ENCODE measurements at regions of chr1 and their contacts with region 1.

Region 1: GRCh38 chr1:109783429-109783831 is 19.7 kb upstream of the EPS8L3 start:
- DNase-seq: peak; percentile 81 to 86
- ATAC-seq: peak; percentile 70
- H3K4me3 ChIP-seq: no peak overlapping the region
- H3K27ac ChIP-seq: peak overlapping the region in 1 of 2 donors; percentile 60
- H3K4me1 ChIP-seq: peaks cover 0 to 4% of the 10 kb centered on the region in 2 donors
- H3K27me3 ChIP-seq: no peaks in the 10 kb centered on the region

Region 2: DNA sequence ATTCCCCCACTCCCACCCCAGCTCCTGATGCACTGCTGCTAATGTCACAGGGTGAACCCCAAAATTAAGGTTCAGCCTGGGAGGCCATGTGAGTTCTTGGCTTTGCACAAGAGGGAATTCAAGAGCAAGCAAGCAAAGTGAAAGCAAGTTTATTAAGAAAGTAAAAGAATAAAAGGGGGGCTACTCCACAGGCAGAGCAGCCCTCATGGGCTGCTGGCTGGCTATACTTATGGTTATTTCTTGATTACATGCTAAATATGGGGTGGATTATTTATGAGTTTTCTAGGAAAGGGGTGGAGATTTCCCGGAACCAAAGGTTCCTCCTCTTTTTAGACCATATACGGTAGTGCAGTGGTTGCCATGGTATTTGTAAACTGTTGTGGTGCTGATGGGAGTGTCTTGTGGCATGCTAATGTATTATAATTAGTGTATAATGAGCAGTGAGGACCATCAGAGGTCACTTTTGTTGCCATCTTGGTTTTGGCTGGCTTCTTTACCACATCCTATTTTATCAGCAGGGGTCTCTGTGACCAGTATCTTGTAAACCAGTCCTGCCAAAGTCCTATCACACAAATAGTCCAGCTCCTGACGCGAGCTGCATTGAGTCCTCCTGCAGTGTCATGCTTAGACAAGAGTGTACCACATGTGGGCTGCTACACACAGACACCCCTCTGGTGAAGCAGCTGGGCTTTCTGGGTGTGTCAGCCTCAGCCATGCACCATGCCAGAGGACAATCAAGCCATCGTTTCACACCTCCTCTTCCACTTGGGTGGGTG is 80.8 kb after region 1 on chr1:
- intact Hi-C with region 1: no loop called
- DNase-seq: no peak
- ATAC-seq: peak; percentile 65
- H3K4me3 ChIP-seq: no peak overlapping the region
- H3K27ac ChIP-seq: no peak overlapping the region
- H3K4me1 ChIP-seq: no peaks in the 10 kb centered on the region
- H3K27me3 ChIP-seq: no peaks in the 10 kb centered on the region

Region 3: DNA sequence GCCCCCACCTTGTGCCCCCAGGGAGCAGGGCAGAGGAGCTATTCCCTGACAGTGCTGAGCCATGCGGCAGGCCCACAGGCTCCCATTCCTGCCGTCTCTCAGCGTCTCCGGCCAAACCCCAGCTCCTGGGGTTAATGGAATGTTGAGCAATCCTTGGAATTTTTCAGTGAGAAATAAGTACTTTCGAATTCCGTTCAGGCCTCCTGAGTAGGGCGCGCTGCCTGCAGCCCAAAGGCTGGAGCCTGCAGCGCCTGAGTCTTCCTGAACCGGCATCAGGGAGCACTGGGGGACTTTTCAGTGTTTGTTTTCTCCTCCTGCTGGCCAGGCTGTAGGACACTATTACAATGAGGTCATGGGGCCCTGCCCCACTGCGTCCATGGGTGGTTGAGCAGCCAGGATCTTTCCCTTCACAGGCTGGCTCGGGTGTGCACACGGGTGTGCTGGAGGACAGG is 93.9 kb after region 1 on chr1:
- intact Hi-C with region 1: loop called in 1 of 2 experiments (anchors 5 kb)
- DNase-seq: peak; percentile 86 to 87
- ATAC-seq: peak; percentile 91
- H3K4me3 ChIP-seq: no peak overlapping the region
- H3K27ac ChIP-seq: peak overlapping the region; percentile 53 to 95
- H3K4me1 ChIP-seq: peaks cover 0 to 4% of the 10 kb centered on the region in 2 donors
- H3K27me3 ChIP-seq: no peaks in the 10 kb centered on the region